Colonic mucosa (tissue), 4 donors: ENCODE measurements at regions of chr7 and their contacts with region 1.

Region 1: DNA sequence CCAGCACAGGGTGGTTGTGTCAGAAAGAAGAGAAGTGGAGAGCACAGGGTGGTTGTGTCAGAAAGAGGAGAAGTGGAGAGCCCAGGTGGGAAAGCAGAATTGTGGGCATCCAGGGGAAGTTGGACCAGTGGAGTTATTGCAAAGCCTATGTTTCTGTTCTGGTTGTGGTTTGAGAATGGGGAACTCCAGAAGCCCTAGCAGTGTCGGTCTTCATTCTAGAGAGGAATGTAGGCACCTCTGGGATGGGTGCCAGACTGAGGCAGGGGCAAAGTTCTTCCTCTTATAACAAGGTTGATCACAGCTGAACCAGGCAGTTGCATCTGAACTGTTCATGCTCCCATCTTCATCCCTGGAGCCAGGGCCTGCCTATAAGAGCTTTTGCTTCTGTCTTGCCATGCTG is 954 bp downstream of the FSCN3 start:
- DNase-seq: peak; percentile 31
- H3K4me3 ChIP-seq: no peak overlapping the region
- H3K27ac ChIP-seq: no peak overlapping the region
- H3K4me1 ChIP-seq: peaks cover 3% of the 10 kb centered on the region
- H3K27me3 ChIP-seq: no peaks in the 10 kb centered on the region
- CTCF ChIP-seq: no peak

Region 2: GRCh38 chr7:127651556-127652332 is 57.3 kb after region 1 on chr7 and contains the start of gene SND1:
- intact Hi-C with region 1: loop called (anchors 5 kb)
- DNase-seq: peak; percentile 99
- H3K4me3 ChIP-seq: peak within 1 kb of the TSS; percentile 95
- H3K27ac ChIP-seq: peak within 1 kb of the TSS; percentile 78
- H3K4me1 ChIP-seq: no peaks in the 10 kb centered on the region
- H3K27me3 ChIP-seq: no peaks in the 10 kb centered on the region
- CTCF ChIP-seq: no peak
- total RNA-seq, gene SND1: 134 to 163 TPM